ENCODE measurements at regions of chr5 and their contacts with region 1.

Region 1: GRCh38 chr5:59367791-59368394 is 525.6 kb downstream of the PDE4D start:
- DNase-seq: peak; percentile 30 to 69
- ATAC-seq: peak in 2 of 3 donors; percentile 71 to 77
- H3K4me3 ChIP-seq: no peak overlapping the region
- H3K4me3 Mint-ChIP-seq: no peak overlapping the region
- H3K27ac ChIP-seq: no peak overlapping the region
- H3K27ac Mint-ChIP-seq: no peak overlapping the region
- H3K4me1 ChIP-seq: no peaks in the 10 kb centered on the region
- H3K4me1 Mint-ChIP-seq: no peaks in the 10 kb centered on the region
- H3K27me3 ChIP-seq: no peaks in the 10 kb centered on the region
- H3K27me3 Mint-ChIP-seq: peaks cover 0 to 4% of the 10 kb centered on the region in 2 donors
- CTCF ChIP-seq: peak; percentile 77

Region 2: DNA sequence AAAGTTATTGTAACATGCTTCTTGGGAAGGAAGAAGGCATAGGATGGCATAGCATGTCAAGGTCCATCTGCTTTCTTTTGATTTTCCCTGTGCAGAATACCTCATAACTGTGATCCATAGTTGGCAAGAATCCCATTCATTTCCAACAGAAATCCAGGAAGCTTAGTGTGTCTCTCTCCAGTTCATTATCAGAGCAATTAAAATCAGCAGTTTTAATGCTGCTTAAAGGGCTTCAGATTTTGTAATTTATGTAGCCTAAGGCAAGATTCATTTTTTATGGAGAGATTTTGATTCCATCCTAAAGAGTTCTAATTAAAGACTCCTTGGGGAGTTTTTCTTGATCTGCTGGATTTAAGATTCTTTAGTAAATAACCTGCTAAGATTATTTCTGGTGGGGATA is 34.5 kb before region 1 on chr5:
- intact Hi-C with region 1: loop called (anchors 5 kb)
- DNase-seq: no peak
- ATAC-seq: no peak
- H3K4me3 ChIP-seq: no peak overlapping the region
- H3K4me3 Mint-ChIP-seq: no peak overlapping the region
- H3K27ac ChIP-seq: no peak overlapping the region
- H3K27ac Mint-ChIP-seq: no peak overlapping the region
- H3K4me1 ChIP-seq: no peaks in the 10 kb centered on the region
- H3K4me1 Mint-ChIP-seq: peaks cover 13 to 16% of the 10 kb centered on the region in 2 donors
- H3K27me3 ChIP-seq: no peaks in the 10 kb centered on the region
- H3K27me3 Mint-ChIP-seq: no peaks in the 10 kb centered on the region
- CTCF ChIP-seq: no peak